ENCODE measurements at regions of chr2 and their contacts with region 1.

Region 1: GRCh38 chr2:88942798-88943197 is 251.3 kb downstream of the RPIA start:
- DNase-seq: no peak
- H3K4me3 ChIP-seq: no peak overlapping the region
- H3K27ac ChIP-seq: no peak overlapping the region
- H3K4me1 ChIP-seq: no peaks in the 10 kb centered on the region
- H3K27me3 ChIP-seq: no peaks in the 10 kb centered on the region
- CTCF ChIP-seq: no peak
- EP300 ChIP-seq: no peak
- POLR2A ChIP-seq: no peak

Region 2: GRCh38 chr2:88269661-88270235 is 673.0 kb before region 1 on chr2:
- in situ Hi-C with region 1: no loop called
- intact Hi-C with region 1: loop called (anchors 10 kb)
- DNase-seq: no peak
- H3K4me3 ChIP-seq: no peak overlapping the region
- H3K27ac ChIP-seq: no peak overlapping the region
- H3K4me1 ChIP-seq: no peaks in the 10 kb centered on the region
- H3K27me3 ChIP-seq: no peaks in the 10 kb centered on the region
- CTCF ChIP-seq: no peak
- EP300 ChIP-seq: no peak
- POLR2A ChIP-seq: no peak